Gastrocnemius medialis (tissue), 4 donors: ENCODE measurements at regions of chr10 and their contacts with region 1.

Region 1: DNA sequence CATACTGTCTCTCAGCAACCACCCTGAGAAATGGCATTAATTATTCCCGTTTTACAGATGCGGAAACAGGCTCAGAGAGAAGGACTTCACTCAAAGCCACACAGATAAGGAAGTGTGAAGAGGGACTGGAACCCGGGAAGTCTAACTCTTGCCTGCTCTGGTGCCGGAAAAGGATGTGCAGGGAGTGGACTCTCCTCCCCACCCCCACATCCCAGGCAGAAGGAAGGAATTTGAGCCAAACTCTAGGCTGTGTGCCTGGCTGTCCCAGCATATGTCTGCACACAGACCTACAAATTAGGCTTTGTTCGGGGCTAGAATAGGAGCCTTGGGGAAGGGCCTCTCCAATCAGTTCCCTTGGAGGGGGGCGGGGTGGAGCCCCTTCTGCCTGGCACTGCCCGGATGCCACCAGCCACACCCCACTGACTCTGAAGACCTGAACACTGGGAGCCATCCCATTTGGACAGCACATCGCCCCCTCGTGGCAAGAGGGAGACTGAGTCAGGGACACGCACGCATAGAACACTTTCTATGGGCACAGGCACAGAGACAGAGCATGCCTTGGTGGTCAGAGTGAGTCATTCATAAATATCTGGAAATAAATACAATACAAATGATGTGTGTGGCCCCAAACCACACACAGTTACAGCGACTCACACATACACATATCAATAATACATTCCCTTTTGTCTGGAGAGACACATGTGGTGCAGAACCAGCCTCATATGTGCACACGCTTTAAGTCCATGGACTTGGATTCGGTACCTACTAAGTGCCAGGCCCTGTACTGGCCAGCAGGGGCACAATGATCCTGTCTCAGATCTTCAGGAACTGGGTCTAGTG is 13.1 kb downstream of the LZTS2 start:
- DNase-seq: peak; percentile 60 to 80
- ATAC-seq: peak; percentile 86 to 91
- H3K4me3 ChIP-seq: no peak overlapping the region
- H3K27ac ChIP-seq: peak overlapping the region; percentile 2 to 52 (median 44)
- H3K4me1 ChIP-seq: peaks cover 5 to 19% of the 10 kb centered on the region in 2 donors
- H3K27me3 ChIP-seq: no peaks in the 10 kb centered on the region
- CTCF ChIP-seq: peak; percentile 61 to 91 (median 89)
- POLR2A ChIP-seq: no peak

Region 2: DNA sequence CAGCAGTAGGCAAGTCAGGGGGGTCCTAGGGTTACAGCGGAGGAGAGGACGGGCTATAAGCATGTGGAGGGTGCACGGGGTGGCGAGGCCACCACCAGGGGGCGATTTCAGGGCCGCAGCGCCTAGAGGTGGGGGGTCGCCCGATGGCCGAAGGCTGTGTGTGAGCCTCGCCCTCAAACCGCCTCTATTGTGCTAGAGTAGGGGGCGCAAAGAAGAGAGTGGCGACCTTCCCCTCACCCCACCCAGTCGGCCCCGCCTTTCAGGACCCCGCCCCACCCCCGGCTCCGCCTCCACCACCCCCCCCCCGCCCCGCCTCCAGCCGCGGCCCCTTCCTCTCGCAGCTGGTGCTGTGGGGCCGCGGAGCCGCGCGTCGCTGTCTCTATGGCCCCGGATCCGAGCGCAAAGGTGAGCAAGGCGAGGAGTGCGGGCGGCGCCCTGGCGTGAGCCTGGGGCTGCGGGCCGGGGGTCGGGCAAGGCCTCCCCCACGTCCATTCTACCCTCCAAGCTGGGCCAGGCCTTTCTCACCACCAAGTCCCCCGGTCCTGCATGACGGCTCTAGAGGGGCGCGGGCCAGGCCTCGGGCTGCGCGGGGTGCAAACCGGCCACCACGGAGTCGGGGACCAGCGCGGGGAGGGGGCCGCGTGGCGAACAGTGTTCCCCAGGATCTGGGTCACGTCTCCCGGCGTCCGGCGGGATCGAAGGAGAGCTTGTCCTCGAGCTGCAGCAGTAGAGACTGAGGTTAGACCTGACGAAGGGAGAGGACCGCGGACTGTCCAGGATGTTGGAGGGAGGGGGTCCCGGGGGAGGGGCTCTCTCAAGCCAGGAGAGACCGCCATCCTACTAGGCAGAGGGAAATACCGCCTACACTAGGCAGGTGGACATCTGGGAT is 43.3 kb before region 1 on chr10 and contains the start of gene SEMA4G:
- in situ Hi-C with region 1: no loop called
- intact Hi-C with region 1: loop called (anchors 1 kb)
- DNase-seq: no peak
- ATAC-seq: peak; percentile 72
- H3K4me3 ChIP-seq: peak within 1 kb of the TSS; percentile 49 to 81 (median 62)
- H3K27ac ChIP-seq: no peak within 1 kb of the TSS
- H3K4me1 ChIP-seq: peaks cover 7 to 16% of the 10 kb centered on the region in 2 donors
- H3K27me3 ChIP-seq: no peaks in the 10 kb centered on the region
- CTCF ChIP-seq: peak; percentile 36 to 75 (median 72)
- POLR2A ChIP-seq: no peak
- total RNA-seq, gene SEMA4G: 0.46 to 1.1 (median 0.52) TPM

Region 3: DNA sequence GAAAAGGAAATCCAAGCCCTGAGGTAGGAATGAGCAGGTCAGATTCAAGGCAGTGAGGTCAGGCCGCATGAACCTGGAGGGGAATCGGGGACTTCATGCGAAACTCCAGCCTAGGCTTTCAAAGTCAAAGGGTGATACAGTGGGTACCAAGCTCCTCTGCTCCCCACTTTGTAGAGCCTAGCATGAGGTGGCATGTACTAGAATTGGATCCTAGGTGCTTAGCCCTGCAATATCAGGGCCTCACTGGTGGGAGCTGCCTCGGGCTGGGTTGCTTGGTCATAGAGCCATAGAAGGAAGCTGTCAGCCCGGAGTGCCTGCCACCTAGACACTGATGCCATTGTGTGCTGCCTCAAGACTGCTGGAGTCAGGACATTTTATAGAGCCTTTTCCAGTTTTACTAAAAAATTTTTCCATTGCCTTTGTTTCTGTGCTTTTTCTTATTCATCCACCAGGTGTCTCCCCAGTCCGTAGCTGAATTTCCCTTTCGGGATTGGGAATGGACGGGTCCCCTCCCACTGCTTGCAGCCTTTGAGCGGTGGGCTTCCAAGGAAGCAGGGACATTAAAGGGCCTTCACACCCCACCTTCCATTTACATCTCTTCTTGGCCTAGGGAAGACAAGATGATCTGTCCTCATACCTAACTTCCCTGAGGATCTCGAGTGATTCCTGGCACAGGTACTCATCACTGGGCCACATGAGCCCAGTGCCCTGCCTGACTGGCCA is 18.6 kb before region 1 on chr10:
- in situ Hi-C with region 1: no loop called
- intact Hi-C with region 1: loop called (anchors 1 kb)
- DNase-seq: no peak
- ATAC-seq: no peak
- H3K4me3 ChIP-seq: no peak overlapping the region
- H3K27ac ChIP-seq: no peak overlapping the region
- H3K4me1 ChIP-seq: peaks cover 17 to 19% of the 10 kb centered on the region in 2 donors
- H3K27me3 ChIP-seq: no peaks in the 10 kb centered on the region
- CTCF ChIP-seq: peak; percentile 64 to 79 (median 73)
- POLR2A ChIP-seq: no peak

Region 4: DNA sequence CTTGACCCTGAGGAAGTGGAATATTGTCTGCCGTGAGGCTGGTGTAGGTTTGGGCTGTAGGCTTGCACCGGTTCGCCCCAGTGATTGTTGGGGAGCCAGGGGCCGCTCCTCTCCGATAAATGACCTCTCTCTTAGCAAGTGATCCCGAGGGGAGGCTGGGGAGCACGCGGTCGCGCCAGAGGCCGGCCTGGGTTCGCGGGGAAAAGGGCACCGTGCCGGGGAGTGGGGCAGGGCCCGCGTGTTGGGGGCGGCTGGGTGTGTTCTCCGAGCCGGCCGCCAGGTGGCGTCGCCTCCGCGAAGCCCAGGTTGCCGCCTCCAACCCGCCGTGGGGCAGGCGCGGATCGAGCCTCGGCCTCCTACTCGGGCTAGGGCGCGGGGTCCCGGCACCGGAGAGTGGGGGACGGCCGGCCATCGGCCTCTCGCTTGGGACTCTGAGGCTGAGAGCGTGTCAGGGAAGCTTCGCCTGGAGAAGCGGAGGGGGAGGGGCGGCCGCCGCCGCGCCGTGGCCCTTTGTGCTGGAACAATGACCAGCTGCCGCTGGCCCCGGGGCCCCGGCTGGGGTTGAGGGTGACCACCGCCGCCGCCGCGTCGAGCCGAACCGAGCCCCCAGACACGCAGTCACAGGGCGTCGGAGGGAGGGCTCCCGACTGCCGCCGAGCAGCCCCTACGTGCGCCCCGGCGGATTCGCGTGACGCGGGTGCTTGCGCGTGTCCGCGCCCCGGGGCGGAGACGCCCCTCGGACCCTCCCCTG is 13.6 kb before region 1 on chr10:
- in situ Hi-C with region 1: no loop called
- intact Hi-C with region 1: loop called (anchors 1 kb)
- DNase-seq: peak; percentile 61 to 78
- ATAC-seq: peak; percentile 58 to 59
- H3K4me3 ChIP-seq: peak overlapping the region; percentile 65 to 97 (median 86)
- H3K27ac ChIP-seq: peak overlapping the region; percentile 95 to 100 (median 98)
- H3K4me1 ChIP-seq: peaks cover 31 to 49% of the 10 kb centered on the region in 2 donors
- H3K27me3 ChIP-seq: no peaks in the 10 kb centered on the region
- CTCF ChIP-seq: peak; percentile 90 to 100 (median 99)
- POLR2A ChIP-seq: peak; percentile 92 to 95

Region 5: GRCh38 chr10:101050208-101051069 is 37.7 kb after region 1 on chr10:
- in situ Hi-C with region 1: no loop called
- intact Hi-C with region 1: no loop called
- DNase-seq: peak in 1 of 2 donors; percentile 57
- ATAC-seq: peak; percentile 40 to 50
- H3K4me3 ChIP-seq: peak overlapping the region; percentile 1 to 47 (median 24)
- H3K27ac ChIP-seq: no peak overlapping the region
- H3K4me1 ChIP-seq: peaks cover 12 to 21% of the 10 kb centered on the region in 2 donors
- H3K27me3 ChIP-seq: peaks cover 34 to 42% (median 40%) of the 10 kb centered on the region in 3 donors
- CTCF ChIP-seq: peak; percentile 61 to 92 (median 84)
- POLR2A ChIP-seq: no peak